Aorta (tissue), 5 donors: ENCODE measurements at regions of chr6 and their contacts with region 1.

Region 1: DNA sequence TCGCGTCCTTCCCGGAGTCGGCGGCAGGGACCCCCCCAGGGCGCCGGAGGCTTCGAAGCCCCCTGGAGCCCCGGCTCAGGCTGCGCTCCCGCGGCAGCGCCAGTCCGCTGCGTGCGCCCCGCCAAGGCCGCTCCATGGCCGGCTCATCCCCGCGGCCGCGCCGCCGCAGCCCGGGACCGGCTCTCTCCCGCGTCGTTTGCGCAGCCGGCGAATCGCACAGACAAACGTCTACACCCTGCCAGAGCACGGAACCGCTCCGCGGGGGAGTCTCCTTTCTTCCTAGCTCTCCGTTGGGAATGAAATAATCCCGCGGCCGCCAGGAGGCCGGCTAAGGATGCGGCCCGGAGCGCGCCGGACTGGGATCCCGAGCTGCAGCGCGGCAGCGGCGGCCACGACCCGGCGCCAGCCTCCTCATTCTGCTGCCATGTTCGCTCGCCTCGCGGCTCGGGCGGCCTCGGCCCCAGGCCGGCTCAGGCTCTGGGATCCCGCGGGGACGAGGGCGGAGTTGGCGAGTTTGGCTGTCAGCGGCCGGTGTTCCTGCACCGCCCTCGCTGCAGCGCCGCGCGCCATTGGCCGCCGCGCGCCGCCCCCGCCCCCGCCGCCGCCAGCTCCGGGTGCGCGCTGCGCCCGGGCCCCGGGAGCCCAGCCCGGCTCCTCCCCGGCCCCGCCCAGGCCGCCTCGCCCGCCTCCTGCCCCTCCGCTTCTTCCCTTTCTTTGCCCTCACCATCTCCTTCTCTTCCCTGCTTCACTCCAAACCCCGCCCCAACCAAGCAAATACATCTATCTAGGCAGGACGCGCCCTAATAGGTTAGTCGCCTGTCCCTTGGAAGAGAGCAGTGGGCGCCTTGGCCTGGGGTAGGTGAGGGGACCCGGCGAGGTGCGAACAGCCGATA is at the start of gene GFOD1:
- DNase-seq: peak; percentile 92 to 96
- ATAC-seq: peak; percentile 93
- H3K4me3 ChIP-seq: peak within 1 kb of the TSS; percentile 50 to 57
- H3K27ac ChIP-seq: peak within 1 kb of the TSS; percentile 68 to 76
- H3K4me1 ChIP-seq: no peaks in the 10 kb centered on the region
- H3K27me3 ChIP-seq: no peaks in the 10 kb centered on the region
- total RNA-seq, gene GFOD1: 16.0 to 17.3 TPM

Region 2: DNA sequence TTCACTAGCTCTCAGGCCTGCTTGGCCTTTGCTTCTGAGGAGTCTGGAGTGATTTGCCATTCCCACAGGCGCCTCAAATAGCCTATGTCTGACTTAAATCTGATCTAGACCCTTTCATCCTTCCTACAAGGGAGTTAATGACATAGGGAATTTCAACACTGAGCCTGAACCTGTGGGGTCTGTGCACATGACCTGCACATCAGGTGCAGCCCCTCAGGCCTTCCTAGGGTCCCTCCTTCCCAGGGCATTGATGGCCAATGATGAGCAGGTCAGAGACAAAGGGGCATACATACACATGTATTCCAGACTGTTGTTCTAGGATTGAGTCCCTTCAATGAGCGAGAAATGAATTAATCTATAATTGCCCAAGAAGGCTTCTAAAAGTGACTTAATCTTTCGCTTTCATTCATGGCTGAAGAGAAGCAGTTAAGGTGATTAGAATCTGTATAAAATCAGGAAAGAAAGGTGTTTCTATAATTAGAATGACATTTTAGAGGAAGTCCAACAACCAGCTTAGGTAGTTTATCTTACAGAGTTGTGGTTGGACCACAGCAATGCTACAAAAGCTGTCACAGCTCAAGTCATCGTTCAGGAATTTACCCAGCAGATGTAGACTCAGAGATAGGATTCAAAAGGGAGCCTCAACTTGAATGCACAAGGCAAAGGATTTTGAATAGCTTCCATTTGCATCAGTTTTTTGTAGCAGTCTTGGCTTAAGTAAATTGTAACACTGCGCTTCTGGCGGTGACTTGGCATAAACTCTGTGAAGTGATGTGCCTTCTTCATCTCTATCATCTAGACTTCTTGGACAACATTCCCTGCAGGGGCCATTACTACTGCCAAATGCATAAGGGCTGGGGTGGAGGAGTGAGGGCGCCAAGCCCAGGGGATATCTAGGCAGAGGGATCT is 132.1 kb before region 1 on chr6:
- intact Hi-C with region 1: no loop called
- DNase-seq: no peak
- ATAC-seq: no peak
- H3K4me3 ChIP-seq: no peak overlapping the region
- H3K27ac ChIP-seq: no peak overlapping the region
- H3K4me1 ChIP-seq: peaks cover 0 to 2% of the 10 kb centered on the region in 2 donors
- H3K27me3 ChIP-seq: no peaks in the 10 kb centered on the region

Region 3: DNA sequence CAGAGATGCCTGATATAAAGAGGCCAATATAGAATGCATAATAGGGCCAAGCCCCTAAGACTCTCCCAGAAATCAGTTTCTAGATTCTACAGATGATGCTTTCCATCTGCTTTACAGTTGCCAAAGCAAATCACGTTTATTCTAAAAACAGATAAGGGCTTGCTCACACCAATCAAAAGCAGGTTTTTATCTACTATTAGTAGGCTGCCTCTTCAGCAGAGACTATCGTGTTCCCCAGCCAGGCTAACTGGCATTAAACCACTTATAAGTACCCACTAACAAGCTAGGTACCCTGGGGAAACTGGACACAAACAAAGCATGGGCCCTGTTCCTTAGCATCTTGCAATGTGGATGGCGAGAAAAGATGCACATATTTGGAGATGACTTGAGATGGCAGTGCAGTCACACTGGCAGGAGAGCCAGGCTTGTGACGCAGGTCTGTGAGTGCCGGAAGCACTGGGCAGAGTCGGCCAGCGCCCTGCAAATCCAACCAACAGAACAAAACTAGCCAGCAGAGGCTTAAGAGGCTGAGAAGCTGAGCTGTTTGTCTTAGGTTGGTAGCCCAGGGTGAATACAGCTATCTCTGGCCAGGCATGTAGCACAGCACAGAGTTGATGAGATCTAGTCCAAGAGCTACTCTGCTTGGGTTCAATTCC is 73.3 kb before region 1 on chr6:
- intact Hi-C with region 1: loop called (anchors 5 kb)
- DNase-seq: peak; percentile 74 to 87
- ATAC-seq: peak; percentile 86
- H3K4me3 ChIP-seq: no peak overlapping the region
- H3K27ac ChIP-seq: peak overlapping the region; percentile 77 to 99
- H3K4me1 ChIP-seq: peaks cover 0 to 9% of the 10 kb centered on the region in 2 donors
- H3K27me3 ChIP-seq: no peaks in the 10 kb centered on the region

Region 4: DNA sequence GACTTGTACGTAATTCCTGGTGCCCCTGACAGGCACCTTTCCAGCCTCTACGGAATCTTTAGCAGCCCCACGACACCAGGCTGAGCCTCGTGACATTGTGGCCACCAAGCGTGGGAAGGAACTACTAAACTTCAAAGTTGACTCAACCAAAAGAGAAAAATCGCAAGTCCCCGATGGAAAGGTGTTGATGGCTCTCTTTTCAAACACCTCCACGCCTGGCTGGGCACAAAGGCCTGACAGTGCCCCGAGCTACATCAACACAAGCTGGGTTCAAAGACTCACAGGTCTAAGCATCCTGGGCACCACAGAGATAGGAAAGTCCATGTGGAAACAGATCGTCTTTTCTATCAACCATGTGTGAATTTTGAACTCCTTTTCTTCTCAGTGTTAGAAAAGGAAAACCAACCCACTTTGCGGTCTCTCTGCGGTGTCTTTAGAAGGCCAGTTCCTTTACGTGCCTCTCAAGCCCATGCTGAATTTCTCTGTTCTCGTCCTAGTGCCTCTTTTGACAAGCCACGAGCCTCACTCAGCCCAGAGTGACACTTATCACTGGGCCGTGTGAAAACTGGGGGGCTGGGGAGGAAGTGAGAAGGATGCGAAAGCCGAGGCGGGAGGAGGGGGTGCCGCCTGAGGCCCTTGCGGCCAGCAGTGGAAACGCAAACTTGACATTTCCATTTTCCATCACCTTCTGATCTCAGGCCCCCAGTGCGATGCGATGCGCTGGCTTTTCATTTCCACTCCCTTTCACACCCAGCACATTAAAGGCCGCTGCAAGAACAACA is 59.4 kb before region 1 on chr6:
- intact Hi-C with region 1: loop called in 1 of 2 experiments (anchors 5 kb)
- DNase-seq: peak in 1 of 2 donors; percentile 57
- ATAC-seq: no peak
- H3K4me3 ChIP-seq: no peak overlapping the region
- H3K27ac ChIP-seq: no peak overlapping the region
- H3K4me1 ChIP-seq: peaks cover 0 to 3% of the 10 kb centered on the region in 2 donors
- H3K27me3 ChIP-seq: no peaks in the 10 kb centered on the region